Spleen (tissue), 13 donors: ENCODE measurements at regions of chr12 and their contacts with region 1.

Region 1: DNA sequence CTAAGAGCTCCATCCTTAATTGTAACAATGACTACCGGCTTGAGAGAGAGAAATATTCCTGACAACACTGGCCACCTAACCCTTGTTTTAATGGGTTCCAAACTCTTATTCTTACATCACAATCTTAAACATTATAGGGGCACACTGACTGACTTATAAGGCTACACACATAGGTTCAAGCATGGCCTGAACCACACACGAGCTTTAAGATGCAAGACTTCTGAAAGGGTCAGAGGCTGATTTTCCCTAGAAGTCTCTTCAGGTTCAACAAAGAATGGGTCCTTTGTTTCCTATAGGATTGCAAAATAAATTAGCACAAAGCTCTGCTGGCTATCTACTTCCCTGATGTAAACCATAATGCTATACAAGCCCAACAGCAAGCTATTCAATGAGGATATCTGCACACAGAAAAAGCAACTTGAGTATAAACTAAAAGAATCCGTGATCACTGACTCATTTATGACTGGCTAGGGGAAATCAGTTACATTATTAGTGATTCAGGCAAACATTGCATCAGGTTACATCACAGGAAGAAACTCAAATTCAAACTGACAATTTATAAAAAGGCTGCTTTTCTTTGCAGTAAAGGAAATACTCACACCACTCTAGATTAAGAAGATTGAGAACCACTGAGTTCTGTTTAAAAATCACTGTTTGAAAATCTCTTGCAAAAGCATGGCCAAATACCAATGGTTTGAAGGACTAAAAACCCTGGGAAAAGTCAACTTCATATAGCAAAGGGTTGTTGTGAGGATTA is 8.5 kb downstream of the BTG1 start:
- DNase-seq: no peak
- H3K4me3 ChIP-seq: peak overlapping the region; percentile 1 to 90 (median 77)
- H3K27ac ChIP-seq: peak overlapping the region; percentile 97 to 100 (median 100)
- H3K4me1 ChIP-seq: peaks cover 46 to 85% (median 71%) of the 10 kb centered on the region in 6 donors
- H3K27me3 ChIP-seq: no peaks in the 10 kb centered on the region
- CTCF ChIP-seq: no peak
- POLR2A ChIP-seq: no peak

Region 2: GRCh38 chr12:91577586-91578539 is 559.3 kb before region 1 on chr12:
- intact Hi-C with region 1: loop called (anchors 10 kb)
- DNase-seq: no peak
- H3K4me3 ChIP-seq: peak overlapping the region in 4 of 8 donors; percentile 0 to 46 (median 18)
- H3K27ac ChIP-seq: no peak overlapping the region
- H3K4me1 ChIP-seq: peaks cover 0 to 17% (median 10%) of the 10 kb centered on the region in 6 donors
- H3K27me3 ChIP-seq: no peaks in the 10 kb centered on the region
- CTCF ChIP-seq: peak; percentile 39 to 78 (median 69)
- POLR2A ChIP-seq: no peak

Region 3: DNA sequence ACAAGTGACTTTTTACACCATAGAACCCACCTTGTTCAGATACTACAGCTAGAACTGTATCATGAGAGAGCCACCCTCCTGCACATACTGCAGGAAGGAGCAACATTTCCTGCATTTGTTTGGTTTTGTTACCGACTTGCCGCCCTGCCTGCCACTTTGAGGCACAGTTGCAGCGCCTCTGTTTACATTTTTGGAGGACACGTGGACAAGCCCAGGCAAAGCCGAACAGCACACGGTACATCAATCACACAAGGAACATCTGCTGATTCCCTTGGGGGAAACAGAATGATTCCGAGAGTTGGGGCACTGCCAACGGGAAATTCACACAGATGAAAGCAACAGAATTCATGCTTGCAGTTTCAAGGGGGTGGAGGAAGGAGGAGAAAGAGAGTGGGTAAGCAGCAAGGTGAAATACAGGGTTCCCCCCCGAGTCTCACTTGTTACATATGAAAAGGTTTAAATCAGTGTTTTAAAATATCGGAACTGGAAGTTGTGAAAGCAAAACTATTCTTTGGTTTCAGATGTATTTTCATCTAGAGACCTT is 102.2 kb before region 1 on chr12:
- intact Hi-C with region 1: loop called (anchors 10 kb)
- DNase-seq: peak; percentile 85
- H3K4me3 ChIP-seq: peak overlapping the region in 7 of 8 donors; percentile 3 to 62 (median 18)
- H3K27ac ChIP-seq: peak overlapping the region; percentile 67 to 92 (median 83)
- H3K4me1 ChIP-seq: peaks cover 20 to 84% (median 58%) of the 10 kb centered on the region in 6 donors
- H3K27me3 ChIP-seq: no peaks in the 10 kb centered on the region
- CTCF ChIP-seq: peak in 1 of 11 experiments; percentile 25
- POLR2A ChIP-seq: peak; percentile 17 to 75 (median 74)